ENCODE measurements at regions of chr11 and their contacts with region 1.

Region 1: DNA sequence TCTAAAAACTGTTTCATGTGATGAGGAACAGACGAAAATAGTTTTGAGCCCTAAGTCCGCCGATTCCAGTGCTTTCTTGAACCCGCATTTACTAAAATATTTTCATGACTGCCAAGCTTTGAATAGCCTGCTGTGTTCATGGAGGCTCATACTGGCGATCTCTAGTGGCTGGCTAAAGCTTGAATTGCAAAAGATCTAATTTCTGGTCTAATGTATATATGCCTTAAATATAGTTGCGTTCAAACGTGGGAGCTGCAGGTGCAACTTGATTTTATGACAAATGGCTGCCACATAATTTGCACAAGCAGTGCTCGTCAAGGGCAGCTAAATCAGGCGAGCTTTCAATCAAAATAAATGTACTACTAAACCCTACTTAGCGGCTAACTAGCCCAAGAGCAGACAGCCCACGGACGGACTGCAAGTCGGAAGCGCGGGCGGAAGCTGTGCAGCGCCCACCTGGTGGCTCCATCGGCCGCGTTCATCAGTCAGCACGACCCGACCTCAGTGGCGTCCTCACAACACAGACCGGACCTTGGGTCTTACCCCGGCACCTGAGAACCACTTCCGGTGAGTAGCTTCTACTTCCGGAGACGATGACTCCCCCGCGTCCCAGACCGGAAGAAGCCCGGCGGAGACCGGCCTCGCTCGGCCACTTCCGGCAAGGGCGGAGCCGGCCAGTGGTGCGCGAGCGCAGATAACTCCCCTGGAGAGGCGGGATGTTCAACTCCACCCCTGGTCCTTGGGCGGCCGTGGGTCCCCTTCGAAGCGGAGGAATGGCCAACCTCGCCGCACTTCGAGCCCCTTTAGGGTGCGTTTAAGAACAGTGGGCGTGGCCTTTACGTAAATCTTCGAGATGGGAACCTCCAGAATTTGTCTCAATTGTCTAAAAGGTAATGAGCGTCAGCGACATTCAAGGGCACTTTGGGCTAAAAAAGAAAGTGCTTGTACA is 6.1 kb downstream of the RPL27A start:
- DNase-seq: peak; percentile 89 to 98 (median 92)
- ATAC-seq: peak; percentile 91
- H3K4me3 ChIP-seq: peak overlapping the region; percentile 49
- H3K27ac ChIP-seq: peak overlapping the region; percentile 96
- H3K4me1 ChIP-seq: peaks cover 13 to 18% of the 10 kb centered on the region in 2 experiments
- H3K27me3 ChIP-seq: no peaks in the 10 kb centered on the region
- CTCF ChIP-seq: peak; percentile 11 to 27 (median 21); a peak in 3 of 6 replicates
- EP300 ChIP-seq: peak; percentile 36; the same call in 1 of the 2 replicates
- POLR2A ChIP-seq: peak; percentile 92
- RAD21 ChIP-seq: peak in 1 of 2 experiments; percentile 44

Region 2: DNA sequence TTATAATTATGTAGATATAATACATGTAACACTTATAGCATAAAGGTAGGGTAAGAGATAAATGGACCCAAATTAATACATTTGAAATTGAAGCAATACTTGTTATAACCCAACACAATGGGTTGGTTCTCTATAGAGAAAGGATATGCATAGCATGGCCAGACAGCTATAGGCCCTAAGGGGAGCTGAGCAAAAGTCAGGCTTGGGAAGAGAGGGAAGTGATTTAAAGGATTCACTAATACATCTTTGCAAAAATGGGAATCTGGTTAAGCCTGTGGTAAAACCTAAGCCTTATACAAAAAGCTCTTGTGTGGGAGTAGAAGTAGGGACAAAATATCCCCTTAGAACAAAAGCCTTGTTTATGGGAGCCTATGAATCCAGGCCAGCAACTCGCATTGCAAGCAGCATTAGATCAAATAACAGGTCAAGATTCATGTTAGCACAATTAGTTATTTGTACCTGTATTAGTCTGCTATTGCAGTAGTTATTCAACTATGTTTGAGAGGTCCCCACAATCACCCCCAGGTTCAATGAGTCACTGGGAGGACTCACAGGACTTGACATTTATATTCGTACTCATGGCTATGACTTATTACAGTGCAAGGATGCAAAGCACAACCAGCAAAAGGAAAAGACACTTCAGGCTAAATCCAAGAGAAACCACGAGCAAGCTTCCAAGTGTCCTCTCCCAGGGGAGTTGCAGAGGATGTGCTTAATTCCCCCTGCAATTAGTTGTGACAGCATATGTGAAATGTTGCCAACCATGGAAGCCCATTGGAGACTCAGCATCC is 280.3 kb before region 1 on chr11:
- CTCF ChIA-PET with region 1: no interaction called
- POLR2A ChIA-PET with region 1: no interaction called
- in situ Hi-C with region 1: no loop called
- intact Hi-C with region 1: no loop called
- DNase-seq: no peak
- ATAC-seq: no peak
- H3K4me3 ChIP-seq: no peak overlapping the region
- H3K27ac ChIP-seq: no peak overlapping the region
- H3K4me1 ChIP-seq: no peaks in the 10 kb centered on the region
- H3K27me3 ChIP-seq: no peaks in the 10 kb centered on the region; a peak in 1 of 5 replicates
- CTCF ChIP-seq: no peak
- EP300 ChIP-seq: no peak
- POLR2A ChIP-seq: no peak
- RAD21 ChIP-seq: no peak

Region 3: GRCh38 chr11:8699903-8700302 is 11.2 kb after region 1 on chr11:
- CTCF ChIA-PET with region 1: no interaction called
- POLR2A ChIA-PET with region 1: interaction called, 30 read pairs
- in situ Hi-C with region 1: no loop called
- intact Hi-C with region 1: no loop called
- DNase-seq: no peak
- ATAC-seq: no peak
- H3K4me3 ChIP-seq: no peak overlapping the region
- H3K27ac ChIP-seq: no peak overlapping the region; the same call in 2 of the 3 replicates
- H3K4me1 ChIP-seq: peaks cover 10 to 27% of the 10 kb centered on the region in 2 experiments
- H3K27me3 ChIP-seq: peaks cover 0 to 10% of the 10 kb centered on the region in 2 experiments; a peak in 2 of 5 replicates
- CTCF ChIP-seq: no peak
- EP300 ChIP-seq: no peak
- POLR2A ChIP-seq: no peak
- RAD21 ChIP-seq: no peak

Region 4: DNA sequence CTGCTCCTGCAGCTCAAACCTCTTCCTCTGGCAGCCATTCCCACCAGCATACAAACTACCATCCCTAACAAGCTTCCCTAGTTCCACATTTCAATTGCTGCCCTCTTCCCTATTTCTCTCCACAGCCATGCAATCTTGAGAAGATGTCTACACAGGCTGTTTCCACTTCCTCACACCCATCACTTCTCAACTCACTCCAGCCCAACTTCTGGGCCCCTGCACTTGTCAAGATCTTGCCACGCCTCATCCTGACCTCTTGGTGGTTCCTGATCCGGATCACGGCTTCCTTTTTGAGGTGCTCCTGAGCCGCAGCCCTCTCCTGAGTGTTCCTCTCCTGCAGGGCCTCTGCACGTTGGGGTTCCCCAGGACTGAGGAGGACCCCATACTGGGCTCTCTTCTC is 16.5 kb after region 1 on chr11:
- CTCF ChIA-PET with region 1: no interaction called
- POLR2A ChIA-PET with region 1: interaction called, 30 read pairs
- in situ Hi-C with region 1: no loop called
- intact Hi-C with region 1: no loop called
- DNase-seq: no peak
- ATAC-seq: no peak
- H3K4me3 ChIP-seq: no peak overlapping the region
- H3K27ac ChIP-seq: no peak overlapping the region
- H3K4me1 ChIP-seq: peaks cover 10 to 18% of the 10 kb centered on the region in 2 experiments
- H3K27me3 ChIP-seq: peaks cover 7 to 36% of the 10 kb centered on the region in 2 experiments; a peak in 4 of 5 replicates
- CTCF ChIP-seq: no peak
- EP300 ChIP-seq: no peak
- POLR2A ChIP-seq: no peak
- RAD21 ChIP-seq: no peak

Region 5: GRCh38 chr11:8732748-8733241 is 44.1 kb after region 1 on chr11:
- CTCF ChIA-PET with region 1: no interaction called
- POLR2A ChIA-PET with region 1: no interaction called
- in situ Hi-C with region 1: no loop called
- intact Hi-C with region 1: loop called (anchors 1 kb)
- DNase-seq: no peak
- ATAC-seq: no peak
- H3K4me3 ChIP-seq: no peak overlapping the region
- H3K27ac ChIP-seq: no peak overlapping the region
- H3K4me1 ChIP-seq: peaks cover 7 to 10% of the 10 kb centered on the region in 2 experiments; a peak in 4 of 5 replicates
- H3K27me3 ChIP-seq: peaks cover 6 to 28% of the 10 kb centered on the region in 2 experiments; a peak in 4 of 5 replicates
- CTCF ChIP-seq: no peak
- EP300 ChIP-seq: no peak
- POLR2A ChIP-seq: no peak
- RAD21 ChIP-seq: no peak

Region 6: DNA sequence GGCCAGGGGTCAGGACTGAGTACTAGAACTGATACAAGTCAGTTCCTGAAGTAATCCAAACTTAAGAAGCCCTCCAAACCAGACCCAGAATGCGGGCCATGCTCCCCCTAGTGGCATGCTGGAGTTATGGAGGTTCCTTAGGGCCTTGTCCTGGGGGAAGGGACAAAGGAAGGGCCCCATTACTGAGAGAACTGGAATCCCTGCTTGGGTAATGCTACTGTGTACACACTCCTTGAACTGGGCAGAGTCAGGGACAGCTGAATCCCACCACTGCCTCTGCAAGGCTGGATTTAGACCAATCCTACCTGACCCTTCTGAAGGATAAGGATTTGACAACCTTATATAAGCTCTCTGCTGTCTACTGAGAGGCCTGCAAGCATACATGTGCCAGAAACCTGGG is 125.0 kb after region 1 on chr11:
- CTCF ChIA-PET with region 1: no interaction called
- POLR2A ChIA-PET with region 1: interaction called, 4 read pairs
- in situ Hi-C with region 1: no loop called
- intact Hi-C with region 1: loop called (anchors 5 kb)
- DNase-seq: peak; percentile 79 to 84 (median 80)
- ATAC-seq: peak; percentile 95
- H3K4me3 ChIP-seq: no peak overlapping the region
- H3K27ac ChIP-seq: no peak overlapping the region
- H3K4me1 ChIP-seq: peaks cover 0 to 5% of the 10 kb centered on the region in 2 experiments; a peak in 4 of 5 replicates
- H3K27me3 ChIP-seq: peaks cover 11 to 18% of the 10 kb centered on the region in 2 experiments
- CTCF ChIP-seq: peak; percentile 82 to 94 (median 82)
- EP300 ChIP-seq: no peak
- POLR2A ChIP-seq: no peak
- RAD21 ChIP-seq: peak; percentile 62 to 70

Measured in K562 (cell line).